ENCODE measurements at regions of chr1 and their contacts with region 1.

Region 1: DNA sequence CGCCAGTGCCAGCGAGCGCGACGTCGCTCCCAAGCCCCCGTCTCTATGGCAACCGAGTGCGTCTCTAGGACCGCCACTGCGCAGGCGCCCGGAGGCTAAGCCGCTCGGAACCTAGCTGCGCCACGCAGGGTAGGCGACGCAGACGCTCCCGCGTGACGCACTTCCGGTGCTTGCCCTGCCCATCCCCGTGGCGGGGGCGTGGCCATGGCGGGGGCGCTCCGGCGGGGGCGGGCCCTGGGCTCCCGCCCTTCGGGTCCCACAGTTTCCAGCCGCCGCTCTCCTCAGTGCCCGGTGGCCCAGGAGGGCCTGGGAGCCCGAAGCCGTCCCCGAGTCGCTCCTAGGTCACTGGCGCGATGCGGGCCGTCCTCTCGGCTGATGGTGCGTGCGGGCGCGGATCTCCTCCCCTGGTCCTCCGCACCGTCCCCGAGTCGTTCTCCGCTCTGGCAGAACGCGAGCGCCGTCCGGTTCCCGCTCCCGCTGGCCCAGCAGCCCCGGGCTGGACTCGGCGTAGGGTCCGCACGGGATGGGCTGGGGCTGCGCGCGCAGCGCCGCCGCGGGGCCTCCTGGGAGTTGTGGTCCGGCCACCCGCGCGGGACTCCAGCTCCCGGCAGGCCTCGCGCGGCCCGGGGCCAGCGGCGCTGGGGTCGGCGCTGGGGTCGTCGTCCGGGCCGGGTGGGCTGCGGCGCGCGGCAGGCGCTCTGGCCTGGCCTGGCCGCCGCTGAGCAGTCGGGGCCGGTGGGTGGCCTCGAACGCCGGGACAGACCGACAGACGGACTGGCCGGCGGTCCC is at the start of gene MIB2:
- DNase-seq: peak; percentile 97
- ATAC-seq: peak; percentile 94 to 96
- total RNA-seq, gene MIB2: 56.4 to 58.1 TPM

Region 2: GRCh38 chr1:1349256-1350012 is 266.0 kb before region 1 on chr1 and contains the start of gene DVL1:
- intact Hi-C with region 1: no loop called
- DNase-seq: peak; percentile 72
- ATAC-seq: peak; percentile 20 to 69
- total RNA-seq, gene DVL1: 63.5 to 69.2 TPM

Region 3: DNA sequence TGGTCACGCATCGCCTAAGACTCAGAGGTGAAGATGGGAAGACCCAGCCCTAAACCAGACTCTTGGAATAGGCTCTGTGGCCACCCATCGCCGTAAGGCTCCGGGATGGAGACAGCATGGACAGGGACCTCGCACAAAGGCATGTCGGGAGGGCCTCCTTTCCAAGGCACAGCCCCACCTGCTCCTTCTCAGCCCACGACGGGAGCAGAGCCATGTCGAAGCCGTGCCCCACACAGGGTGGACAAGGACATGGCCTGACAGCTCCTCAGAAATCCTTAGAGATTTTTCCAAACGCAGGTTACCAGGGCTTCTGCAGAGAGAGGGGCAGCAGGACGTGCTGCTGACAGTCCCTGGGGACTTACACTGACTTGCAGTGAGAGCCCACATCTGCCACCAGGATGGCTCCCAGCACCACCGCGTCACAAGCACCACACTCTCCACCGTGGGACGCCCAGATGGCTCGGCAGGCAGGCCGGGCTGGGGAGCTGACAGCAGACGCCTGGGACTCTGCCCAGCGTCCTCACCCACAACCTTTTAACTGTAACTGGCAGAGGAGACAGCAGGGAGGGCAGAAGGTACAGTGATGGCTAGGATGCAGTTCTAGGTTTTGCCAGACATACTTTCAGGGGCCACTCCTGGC is 52.8 kb before region 1 on chr1:
- intact Hi-C with region 1: loop called in 1 of 2 experiments (anchors 5 kb)
- DNase-seq: no peak
- ATAC-seq: peak in 1 of 2 donors; percentile 66

Region 4: GRCh38 chr1:1574721-1575537 is 40.5 kb before region 1 on chr1 and contains the start of gene SSU72:
- intact Hi-C with region 1: loop called in 1 of 2 experiments (anchors 2 kb)
- DNase-seq: peak; percentile 96
- ATAC-seq: peak; percentile 96 to 97
- total RNA-seq, gene SSU72: 107 to 118 TPM